ENCODE measurements at regions of chr17 and their contacts with region 1.

Region 1: GRCh38 chr17:80663781-80664206 is 119.2 kb downstream of the RPTOR start:
- DNase-seq: peak; percentile 19 to 82 (median 42)
- ATAC-seq: peak; percentile 69
- H3K4me3 ChIP-seq: no peak overlapping the region
- H3K4me3 Mint-ChIP-seq: peak overlapping the region; percentile 71
- H3K27ac ChIP-seq: peak overlapping the region; percentile 61 to 88
- H3K27ac Mint-ChIP-seq: peak overlapping the region; percentile 99
- H3K4me1 ChIP-seq: peaks cover 60% of the 10 kb centered on the region
- H3K4me1 Mint-ChIP-seq: peaks cover 81% of the 10 kb centered on the region
- H3K27me3 ChIP-seq: no peaks in the 10 kb centered on the region
- H3K27me3 Mint-ChIP-seq: no peaks in the 10 kb centered on the region
- CTCF ChIP-seq: no peak

Region 2: DNA sequence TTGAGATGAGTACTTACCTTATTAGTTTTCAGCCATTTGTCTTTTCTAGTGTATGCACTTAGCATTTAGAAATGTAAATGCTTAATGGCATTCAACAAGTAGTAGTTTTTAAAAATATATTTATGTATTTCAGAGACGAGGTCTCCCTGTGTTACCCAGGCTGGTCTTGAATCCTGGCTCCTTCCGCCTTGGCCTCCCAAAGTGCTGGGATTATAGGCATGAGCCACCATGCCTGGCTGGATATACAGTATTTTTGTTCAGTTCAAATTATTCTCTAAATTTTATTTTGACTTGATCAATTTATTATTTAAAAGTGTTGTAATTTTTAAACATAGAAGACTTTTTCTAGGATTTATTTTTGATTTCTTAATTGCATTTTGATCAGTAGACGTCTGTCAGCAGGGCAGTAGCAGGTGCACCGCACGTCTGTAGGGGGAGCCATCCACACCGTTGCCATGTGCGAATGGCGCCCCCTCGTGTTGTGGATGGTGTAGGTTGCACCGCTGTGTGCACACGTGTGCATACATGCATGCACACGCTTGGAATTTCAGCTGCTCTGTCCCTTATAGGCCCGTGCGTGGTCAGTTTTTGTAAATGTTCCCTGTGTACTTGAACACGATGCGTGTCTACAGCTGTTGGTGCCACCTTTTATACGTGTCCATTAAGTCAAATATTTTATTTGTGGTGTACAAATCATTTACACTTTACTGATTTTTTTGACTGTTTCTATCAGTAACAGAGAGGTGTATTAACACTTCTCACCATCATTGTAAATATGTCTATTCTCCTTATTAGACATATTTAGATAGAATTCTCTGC is 88.5 kb before region 1 on chr17:
- CTCF ChIA-PET with region 1: no interaction called
- POLR2A ChIA-PET with region 1: interaction called, 3 read pairs
- intact Hi-C with region 1: loop called in 1 of 2 experiments (anchors 5 kb)
- DNase-seq: peak; percentile 85 to 97 (median 90)
- ATAC-seq: peak; percentile 100
- H3K4me3 ChIP-seq: no peak overlapping the region
- H3K4me3 Mint-ChIP-seq: no peak overlapping the region
- H3K27ac ChIP-seq: no peak overlapping the region
- H3K27ac Mint-ChIP-seq: no peak overlapping the region
- H3K4me1 ChIP-seq: no peaks in the 10 kb centered on the region
- H3K4me1 Mint-ChIP-seq: peaks cover 25% of the 10 kb centered on the region
- H3K27me3 ChIP-seq: no peaks in the 10 kb centered on the region
- H3K27me3 Mint-ChIP-seq: no peaks in the 10 kb centered on the region
- CTCF ChIP-seq: peak; percentile 100

Region 3: DNA sequence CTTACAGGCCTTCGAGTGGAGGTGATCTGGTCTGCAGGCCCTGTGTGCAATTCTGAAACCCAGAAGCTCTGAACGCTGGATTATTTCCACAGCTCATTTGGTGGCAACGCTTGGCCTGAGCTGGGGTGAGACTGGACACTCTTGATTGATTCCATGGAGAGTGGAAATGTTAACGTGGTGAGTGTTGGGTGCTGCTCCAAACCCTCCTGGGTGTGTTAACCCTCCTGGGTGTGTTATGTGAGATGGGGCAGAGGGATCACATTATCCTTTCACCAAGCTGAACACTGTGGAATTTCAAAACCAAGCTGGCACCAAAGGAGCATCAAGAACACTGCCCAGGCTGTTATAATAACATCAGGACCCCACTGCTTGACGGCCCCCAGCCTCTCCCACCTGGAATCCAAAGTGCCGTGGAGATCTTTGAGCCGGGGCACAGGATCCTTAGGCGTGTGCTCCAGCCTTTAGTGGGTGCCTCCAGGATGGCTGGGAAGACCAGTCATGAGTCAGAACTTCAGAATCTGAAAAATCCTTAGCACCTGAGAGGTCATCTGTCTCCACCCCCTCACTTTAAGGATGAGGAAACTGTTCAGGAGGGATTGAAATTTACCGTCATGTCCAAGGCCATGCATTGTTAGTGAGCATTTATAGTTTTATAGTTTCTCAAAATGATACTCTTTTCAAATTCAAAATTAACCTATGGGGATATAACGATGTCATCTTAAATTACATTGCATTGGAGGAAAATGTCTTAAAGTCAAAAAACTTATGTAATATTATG is 44.1 kb before region 1 on chr17:
- CTCF ChIA-PET with region 1: no interaction called
- POLR2A ChIA-PET with region 1: no interaction called
- intact Hi-C with region 1: loop called in 1 of 2 experiments (anchors 10 kb)
- DNase-seq: no peak
- ATAC-seq: no peak
- H3K4me3 ChIP-seq: no peak overlapping the region
- H3K4me3 Mint-ChIP-seq: no peak overlapping the region
- H3K27ac ChIP-seq: no peak overlapping the region
- H3K27ac Mint-ChIP-seq: no peak overlapping the region
- H3K4me1 ChIP-seq: peaks cover 29% of the 10 kb centered on the region
- H3K4me1 Mint-ChIP-seq: peaks cover 55% of the 10 kb centered on the region
- H3K27me3 ChIP-seq: no peaks in the 10 kb centered on the region
- H3K27me3 Mint-ChIP-seq: no peaks in the 10 kb centered on the region
- CTCF ChIP-seq: no peak

Region 4: DNA sequence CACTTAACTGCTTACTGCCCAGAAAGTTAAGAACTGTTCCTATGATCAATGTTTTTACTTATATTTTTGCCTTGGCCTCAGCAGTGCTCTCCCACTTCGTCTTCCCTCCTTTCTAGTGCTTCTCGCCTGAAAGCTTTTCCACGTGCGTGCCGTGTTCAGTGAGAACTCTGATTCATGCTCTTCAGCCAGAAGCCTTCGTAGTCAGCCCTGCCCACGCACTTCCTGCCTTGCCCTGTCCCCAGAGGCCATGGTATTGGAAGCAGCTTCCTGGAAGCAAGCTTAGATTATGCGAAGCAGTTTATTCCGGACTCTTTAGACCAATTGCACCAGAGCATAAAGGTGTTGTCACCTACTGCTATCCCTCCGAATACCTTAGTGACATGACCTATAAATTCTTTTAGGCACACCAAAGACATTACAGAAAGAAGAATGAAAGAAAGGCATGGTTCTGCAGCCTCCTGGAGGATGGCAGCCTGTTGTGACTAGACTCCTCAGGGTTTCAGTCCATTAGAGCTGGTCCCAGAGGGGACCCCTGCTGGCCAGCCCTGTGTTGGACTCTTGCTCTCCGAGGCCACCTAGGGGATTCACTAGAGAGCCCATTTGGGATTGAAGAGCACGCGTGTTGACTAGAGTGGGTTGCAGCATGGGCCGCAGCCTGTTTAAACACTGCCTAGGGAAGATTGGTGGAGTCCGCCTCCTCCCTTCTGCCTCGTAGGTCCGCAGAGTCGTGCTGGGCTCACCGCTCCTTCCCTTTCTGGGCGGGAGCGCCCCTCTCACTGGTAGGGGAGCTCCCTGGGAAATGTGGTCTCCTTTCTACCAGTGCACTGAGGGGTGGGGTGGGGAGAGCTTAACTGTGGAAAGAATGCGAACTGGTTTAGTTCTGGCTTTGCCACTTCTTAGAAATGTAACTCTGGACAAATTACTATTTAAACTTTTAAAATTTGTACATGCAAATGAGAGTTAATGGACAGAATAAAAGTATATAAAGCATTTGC is 13.8 kb before region 1 on chr17:
- CTCF ChIA-PET with region 1: interaction called, 12 read pairs
- POLR2A ChIA-PET with region 1: interaction called, 18 read pairs
- intact Hi-C with region 1: loop called in 1 of 2 experiments (anchors 1 kb)
- DNase-seq: peak; percentile 25 to 82 (median 60)
- ATAC-seq: peak; percentile 92
- H3K4me3 ChIP-seq: peak overlapping the region; percentile 24
- H3K4me3 Mint-ChIP-seq: peak overlapping the region; percentile 70
- H3K27ac ChIP-seq: peak overlapping the region; percentile 32 to 53
- H3K27ac Mint-ChIP-seq: peak overlapping the region; percentile 85
- H3K4me1 ChIP-seq: peaks cover 56% of the 10 kb centered on the region
- H3K4me1 Mint-ChIP-seq: peaks cover 68% of the 10 kb centered on the region
- H3K27me3 ChIP-seq: no peaks in the 10 kb centered on the region
- H3K27me3 Mint-ChIP-seq: no peaks in the 10 kb centered on the region
- CTCF ChIP-seq: no peak

Region 5: GRCh38 chr17:80694085-80694991 is 30.5 kb after region 1 on chr17:
- CTCF ChIA-PET with region 1: no interaction called
- POLR2A ChIA-PET with region 1: no interaction called
- intact Hi-C with region 1: no loop called
- DNase-seq: no peak
- ATAC-seq: no peak
- H3K4me3 ChIP-seq: no peak overlapping the region
- H3K4me3 Mint-ChIP-seq: no peak overlapping the region
- H3K27ac ChIP-seq: no peak overlapping the region
- H3K27ac Mint-ChIP-seq: no peak overlapping the region
- H3K4me1 ChIP-seq: peaks cover 18% of the 10 kb centered on the region
- H3K4me1 Mint-ChIP-seq: peaks cover 50% of the 10 kb centered on the region
- H3K27me3 ChIP-seq: no peaks in the 10 kb centered on the region
- H3K27me3 Mint-ChIP-seq: no peaks in the 10 kb centered on the region
- CTCF ChIP-seq: no peak

Region 6: DNA sequence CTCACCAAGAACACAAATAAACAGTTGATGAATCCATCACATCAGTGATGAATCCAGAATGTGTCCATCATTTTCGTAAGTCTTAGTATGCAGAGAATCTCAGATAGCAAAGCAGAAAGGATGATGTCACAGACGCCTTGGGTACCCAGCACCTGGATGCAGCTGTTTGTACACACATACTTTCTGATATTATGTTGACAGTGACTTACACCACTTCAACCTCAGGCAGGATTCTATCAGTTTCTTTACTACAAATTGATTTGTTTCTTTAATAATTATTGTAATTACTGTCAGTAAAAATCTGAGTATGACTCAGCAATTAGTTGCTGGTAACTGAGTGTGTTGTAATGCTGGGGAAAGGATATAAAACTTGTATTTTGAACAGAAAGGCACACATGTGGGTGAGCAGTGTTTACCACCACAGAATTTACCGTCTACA is 40.6 kb after region 1 on chr17:
- CTCF ChIA-PET with region 1: no interaction called
- POLR2A ChIA-PET with region 1: interaction called, 10 read pairs
- intact Hi-C with region 1: loop called in 1 of 2 experiments (anchors 5 kb)
- DNase-seq: no peak
- ATAC-seq: no peak
- H3K4me3 ChIP-seq: no peak overlapping the region
- H3K4me3 Mint-ChIP-seq: no peak overlapping the region
- H3K27ac ChIP-seq: no peak overlapping the region
- H3K27ac Mint-ChIP-seq: peak overlapping the region; percentile 65
- H3K4me1 ChIP-seq: peaks cover 52% of the 10 kb centered on the region
- H3K4me1 Mint-ChIP-seq: peaks cover 72% of the 10 kb centered on the region
- H3K27me3 ChIP-seq: no peaks in the 10 kb centered on the region
- H3K27me3 Mint-ChIP-seq: no peaks in the 10 kb centered on the region
- CTCF ChIP-seq: no peak

Region 7: DNA sequence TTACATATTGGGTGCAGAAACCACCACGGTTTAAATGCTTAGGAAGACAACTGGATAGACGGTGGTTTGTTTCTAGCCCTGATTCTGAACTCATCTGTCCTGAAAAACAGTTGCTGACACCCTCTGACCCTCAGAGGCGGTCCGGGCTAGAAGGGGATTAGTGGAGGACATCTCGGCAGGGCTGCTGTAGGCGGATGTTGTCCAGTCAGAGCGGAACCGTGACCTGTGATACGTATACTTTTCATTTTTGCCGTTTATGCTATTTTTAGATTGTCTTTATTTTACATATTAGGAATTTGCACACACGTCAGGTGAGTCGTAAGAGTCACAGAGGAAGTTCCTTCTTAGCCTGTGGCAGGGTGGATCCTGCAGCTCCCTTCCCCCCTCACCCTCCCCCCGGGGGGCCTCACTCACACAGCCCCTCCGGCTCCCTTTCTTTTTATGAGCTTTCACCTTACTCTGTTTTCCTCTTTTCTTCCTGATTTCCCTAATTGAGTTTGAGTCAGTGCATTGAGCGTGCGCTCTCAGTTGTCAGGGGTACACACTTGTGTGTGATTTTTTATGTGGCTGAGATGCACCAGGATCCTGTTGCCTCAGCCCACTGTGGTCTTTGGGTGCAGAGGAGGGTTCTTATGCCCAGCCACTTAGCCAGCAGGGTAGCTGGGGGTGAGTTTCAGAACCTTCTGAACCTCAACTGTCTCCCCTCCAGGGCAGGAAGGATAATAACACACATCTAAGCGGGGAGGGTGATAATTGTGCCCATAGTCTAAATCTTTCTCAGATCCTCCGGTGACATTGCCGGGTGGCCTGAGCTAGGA is 116.8 kb after region 1 on chr17:
- CTCF ChIA-PET with region 1: no interaction called
- POLR2A ChIA-PET with region 1: interaction called, 4 read pairs
- intact Hi-C with region 1: loop called in 1 of 2 experiments (anchors 5 kb)
- DNase-seq: peak in 3 of 14 experiments; percentile 50 to 67 (median 50)
- ATAC-seq: peak; percentile 54
- H3K4me3 ChIP-seq: peak overlapping the region; percentile 32
- H3K4me3 Mint-ChIP-seq: peak overlapping the region; percentile 36
- H3K27ac ChIP-seq: peak overlapping the region; percentile 55 to 75
- H3K27ac Mint-ChIP-seq: peak overlapping the region; percentile 85
- H3K4me1 ChIP-seq: peaks cover 58% of the 10 kb centered on the region
- H3K4me1 Mint-ChIP-seq: peaks cover 76% of the 10 kb centered on the region
- H3K27me3 ChIP-seq: no peaks in the 10 kb centered on the region
- H3K27me3 Mint-ChIP-seq: no peaks in the 10 kb centered on the region
- CTCF ChIP-seq: no peak

Region 8: DNA sequence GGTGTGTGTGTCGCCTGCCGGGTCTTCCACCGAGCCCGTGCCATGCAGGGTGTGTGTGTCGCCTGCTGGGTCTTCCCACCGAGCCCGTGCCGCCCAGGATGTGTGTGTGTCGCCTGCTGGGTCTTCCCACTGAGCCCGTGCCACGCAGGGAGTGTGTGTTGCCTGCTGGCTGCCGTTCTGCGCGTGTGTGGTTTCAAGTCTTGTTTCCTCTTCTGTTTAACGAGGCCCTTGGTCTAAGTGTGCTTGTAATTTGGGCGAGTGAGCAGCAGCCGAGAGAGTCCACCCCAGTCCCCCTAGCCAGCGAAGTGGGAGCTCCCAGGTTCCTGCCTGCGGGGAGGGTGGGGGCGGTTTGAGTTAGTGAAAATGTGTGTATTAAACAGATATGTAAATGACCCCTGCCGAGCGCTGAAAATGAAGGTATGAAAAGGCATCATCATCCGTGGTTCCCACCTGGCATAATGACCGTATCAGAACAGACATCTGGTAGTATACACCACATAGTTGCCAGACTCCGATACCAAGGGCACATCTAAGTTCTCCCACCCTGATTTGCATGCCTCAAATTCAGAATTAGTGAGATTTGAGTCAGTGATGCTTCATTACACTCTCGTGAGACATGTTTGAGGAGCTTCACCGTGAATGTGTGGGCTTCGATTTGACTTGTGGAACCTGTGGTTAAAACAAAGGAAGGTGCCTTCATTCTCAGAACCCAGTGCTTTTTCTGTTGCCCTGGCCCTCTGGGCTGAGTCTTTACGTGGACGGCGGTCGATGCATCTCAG is 213.3 kb after region 1 on chr17:
- CTCF ChIA-PET with region 1: no interaction called
- POLR2A ChIA-PET with region 1: no interaction called
- intact Hi-C with region 1: no loop called
- DNase-seq: peak in 5 of 14 experiments; percentile 7 to 63 (median 60)
- ATAC-seq: peak; percentile 48
- H3K4me3 ChIP-seq: peak overlapping the region; percentile 38
- H3K4me3 Mint-ChIP-seq: peak overlapping the region; percentile 80
- H3K27ac ChIP-seq: peak overlapping the region in 1 of 2 donors; percentile 11
- H3K27ac Mint-ChIP-seq: peak overlapping the region; percentile 42
- H3K4me1 ChIP-seq: peaks cover 35% of the 10 kb centered on the region
- H3K4me1 Mint-ChIP-seq: peaks cover 44% of the 10 kb centered on the region
- H3K27me3 ChIP-seq: no peaks in the 10 kb centered on the region
- H3K27me3 Mint-ChIP-seq: no peaks in the 10 kb centered on the region
- CTCF ChIP-seq: no peak

Region 9: DNA sequence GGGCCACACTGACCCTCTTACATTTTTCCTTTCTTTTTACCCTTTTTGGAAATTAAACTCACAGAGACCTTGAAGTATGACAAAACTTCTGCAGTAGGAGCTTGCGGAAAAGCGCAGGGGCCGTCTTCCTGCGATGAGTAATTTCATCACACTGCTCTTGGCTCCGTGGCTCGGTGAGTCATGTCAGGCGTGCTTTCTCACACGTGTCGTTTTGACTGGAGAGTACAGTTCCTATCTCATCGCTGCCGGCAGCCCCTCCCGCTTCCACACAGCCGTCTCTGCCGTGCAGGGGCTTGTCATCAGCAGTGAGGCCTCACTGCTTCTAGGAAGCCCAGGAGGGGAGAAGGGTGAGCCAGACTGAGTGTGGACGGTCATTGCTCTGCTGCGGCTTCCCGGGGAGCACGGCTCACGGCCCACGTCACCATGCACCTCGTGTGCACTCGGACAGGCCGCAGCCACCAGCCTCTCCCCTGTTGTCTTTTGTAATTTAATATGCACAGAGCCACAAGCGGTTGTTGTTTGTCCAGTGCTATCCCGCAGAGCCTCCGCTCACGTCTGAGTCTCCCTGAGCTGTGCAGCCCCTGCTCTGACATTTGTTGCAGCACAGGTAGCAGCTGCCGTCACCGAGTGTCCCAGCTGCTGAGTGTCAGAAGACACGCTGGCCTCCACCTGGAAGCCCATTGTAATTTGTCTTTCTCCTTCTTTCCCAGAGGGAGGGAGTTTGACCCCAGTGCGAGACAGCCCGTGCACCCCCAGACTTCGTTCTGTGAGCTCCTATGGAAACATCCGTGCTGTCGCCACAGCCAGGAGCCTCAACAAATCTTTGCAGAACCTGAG is 228.4 kb after region 1 on chr17:
- CTCF ChIA-PET with region 1: no interaction called
- POLR2A ChIA-PET with region 1: no interaction called
- intact Hi-C with region 1: loop called in 1 of 2 experiments (anchors 10 kb)
- DNase-seq: peak; percentile 61 to 92 (median 80)
- ATAC-seq: peak; percentile 77
- H3K4me3 ChIP-seq: peak overlapping the region; percentile 37
- H3K4me3 Mint-ChIP-seq: peak overlapping the region; percentile 75
- H3K27ac ChIP-seq: peak overlapping the region; percentile 80 to 82
- H3K27ac Mint-ChIP-seq: peak overlapping the region; percentile 93
- H3K4me1 ChIP-seq: peaks cover 63% of the 10 kb centered on the region
- H3K4me1 Mint-ChIP-seq: peaks cover 50% of the 10 kb centered on the region
- H3K27me3 ChIP-seq: no peaks in the 10 kb centered on the region
- H3K27me3 Mint-ChIP-seq: no peaks in the 10 kb centered on the region
- CTCF ChIP-seq: no peak

Measured in CD4-positive, alpha-beta T cell (primary cell).